ENCODE measurements at regions of chrX and their contacts with region 1.

Region 1: GRCh38 chrX:12021698-12022097 is 116.6 kb upstream of the FRMPD4 start:
- DNase-seq: no peak
- H3K4me3 ChIP-seq: no peak overlapping the region
- H3K27ac ChIP-seq: no peak overlapping the region
- H3K4me1 ChIP-seq: peaks cover 11% of the 10 kb centered on the region
- H3K27me3 ChIP-seq: peaks cover 5 to 13% of the 10 kb centered on the region in 2 experiments
- CTCF ChIP-seq: no peak
- POLR2A ChIP-seq: no peak

Region 2: DNA sequence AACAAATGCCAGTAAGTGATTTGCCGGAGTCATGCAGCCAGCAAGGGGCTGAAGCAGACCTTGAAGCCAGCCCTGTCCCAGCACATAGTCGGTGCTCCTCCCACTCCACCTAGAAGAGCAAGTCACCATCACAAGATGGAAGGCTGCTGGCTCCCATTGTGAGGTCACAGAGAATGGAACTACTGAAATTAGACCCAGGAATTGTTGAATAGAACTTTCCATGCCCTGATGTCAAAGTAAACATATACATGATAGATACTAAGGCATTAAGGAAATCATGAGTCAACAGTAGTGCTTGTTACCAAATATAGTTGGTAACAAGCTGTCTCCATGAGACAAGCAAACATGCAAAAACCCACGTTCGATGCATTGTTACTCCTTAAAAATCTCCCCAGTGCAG is 1224.2 kb before region 1 on chrX:
- CTCF ChIA-PET with region 1: no interaction called
- POLR2A ChIA-PET with region 1: no interaction called
- dilution Hi-C with region 1: no loop called
- intact Hi-C with region 1: no loop called
- DNase-seq: peak; percentile 4
- H3K4me3 ChIP-seq: no peak overlapping the region
- H3K27ac ChIP-seq: no peak overlapping the region
- H3K4me1 ChIP-seq: no peaks in the 10 kb centered on the region
- H3K27me3 ChIP-seq: no peaks in the 10 kb centered on the region
- CTCF ChIP-seq: no peak
- POLR2A ChIP-seq: no peak

Region 3: DNA sequence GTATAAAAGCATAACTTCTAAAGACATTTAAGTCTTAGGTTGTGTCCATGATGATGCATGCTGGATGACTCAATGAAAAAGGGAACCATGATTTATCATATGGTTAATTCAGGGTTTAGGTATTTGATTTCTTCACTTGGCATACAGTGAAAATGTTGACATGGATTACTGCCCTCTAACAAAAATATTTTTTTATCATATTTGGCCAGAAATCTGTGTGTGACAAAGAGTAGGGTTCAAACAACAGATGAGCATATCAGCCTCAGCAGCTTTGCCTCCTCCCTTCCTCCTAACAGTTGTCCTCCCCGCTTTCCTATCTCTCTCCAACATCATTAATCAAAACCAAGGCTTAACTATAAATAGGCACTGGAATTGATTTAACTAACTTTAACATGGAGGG is 402.3 kb before region 1 on chrX:
- CTCF ChIA-PET with region 1: no interaction called
- POLR2A ChIA-PET with region 1: no interaction called
- dilution Hi-C with region 1: no loop called
- intact Hi-C with region 1: no loop called
- DNase-seq: no peak
- H3K4me3 ChIP-seq: no peak overlapping the region
- H3K27ac ChIP-seq: no peak overlapping the region
- H3K4me1 ChIP-seq: no peaks in the 10 kb centered on the region
- H3K27me3 ChIP-seq: no peaks in the 10 kb centered on the region
- CTCF ChIP-seq: no peak
- POLR2A ChIP-seq: no peak

Region 4: DNA sequence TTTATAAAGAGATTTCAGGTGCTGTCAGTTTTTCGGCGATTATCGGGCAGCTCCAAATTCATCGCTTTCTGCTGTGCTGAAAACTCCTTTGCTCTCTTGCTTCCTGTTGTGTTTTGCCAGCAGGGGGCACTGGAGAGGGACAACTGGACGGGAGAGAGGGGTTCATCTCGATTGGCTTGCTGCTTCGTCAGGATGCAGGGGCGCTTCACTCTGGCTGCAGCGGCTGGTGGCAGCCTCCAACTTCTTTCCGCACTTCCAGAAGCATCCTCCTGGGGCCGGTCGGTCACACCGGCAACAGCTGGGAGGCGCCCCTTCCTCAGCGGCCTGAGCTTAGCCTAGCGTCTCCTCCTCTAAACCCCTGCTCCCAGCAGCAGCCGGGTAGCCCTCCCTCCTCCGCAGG is 234.1 kb before region 1 on chrX:
- CTCF ChIA-PET with region 1: no interaction called
- POLR2A ChIA-PET with region 1: no interaction called
- dilution Hi-C with region 1: no loop called
- intact Hi-C with region 1: loop called (anchors 10 kb)
- DNase-seq: peak; percentile 49
- H3K4me3 ChIP-seq: no peak overlapping the region
- H3K27ac ChIP-seq: no peak overlapping the region
- H3K4me1 ChIP-seq: no peaks in the 10 kb centered on the region
- H3K27me3 ChIP-seq: no peaks in the 10 kb centered on the region
- CTCF ChIP-seq: peak; percentile 56 to 62
- POLR2A ChIP-seq: no peak

Region 5: GRCh38 chrX:11953615-11954014 is 68.1 kb before region 1 on chrX:
- CTCF ChIA-PET with region 1: no interaction called
- POLR2A ChIA-PET with region 1: no interaction called
- dilution Hi-C with region 1: no loop called
- intact Hi-C with region 1: loop called (anchors 2 kb)
- DNase-seq: no peak
- H3K4me3 ChIP-seq: no peak overlapping the region
- H3K27ac ChIP-seq: peak overlapping the region; percentile 63
- H3K4me1 ChIP-seq: peaks cover 20% of the 10 kb centered on the region
- H3K27me3 ChIP-seq: no peaks in the 10 kb centered on the region
- CTCF ChIP-seq: no peak
- POLR2A ChIP-seq: no peak

Region 6: GRCh38 chrX:11967986-11968859 is 53.5 kb before region 1 on chrX:
- CTCF ChIA-PET with region 1: no interaction called
- POLR2A ChIA-PET with region 1: no interaction called
- dilution Hi-C with region 1: no loop called
- intact Hi-C with region 1: loop called (anchors 5 kb)
- DNase-seq: no peak
- H3K4me3 ChIP-seq: no peak overlapping the region
- H3K27ac ChIP-seq: no peak overlapping the region
- H3K4me1 ChIP-seq: peaks cover 39% of the 10 kb centered on the region
- H3K27me3 ChIP-seq: no peaks in the 10 kb centered on the region
- CTCF ChIP-seq: no peak
- POLR2A ChIP-seq: no peak

Region 7: DNA sequence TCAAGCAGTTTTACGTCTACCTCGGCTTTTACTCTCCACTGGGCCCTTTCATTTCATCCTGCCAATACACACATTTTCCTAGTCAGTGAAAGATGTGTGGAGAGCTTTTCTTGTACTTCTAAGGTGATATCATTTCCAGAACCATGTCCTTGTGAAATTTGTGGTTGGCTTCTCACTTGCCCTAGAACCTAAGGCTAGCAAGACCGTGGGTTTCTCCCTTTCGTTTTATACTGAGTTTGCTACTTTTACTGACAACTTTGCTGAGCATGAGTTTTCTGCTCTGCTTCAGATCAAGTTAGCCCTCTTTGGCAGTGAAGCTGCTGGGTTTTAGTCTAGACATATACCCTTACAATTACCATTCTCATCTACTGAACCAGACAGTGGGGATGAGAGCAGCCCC is 20.9 kb after region 1 on chrX:
- CTCF ChIA-PET with region 1: no interaction called
- POLR2A ChIA-PET with region 1: no interaction called
- dilution Hi-C with region 1: no loop called
- intact Hi-C with region 1: no loop called
- DNase-seq: no peak
- H3K4me3 ChIP-seq: no peak overlapping the region
- H3K27ac ChIP-seq: no peak overlapping the region
- H3K4me1 ChIP-seq: no peaks in the 10 kb centered on the region
- H3K27me3 ChIP-seq: peaks cover 0 to 2% of the 10 kb centered on the region in 2 experiments
- CTCF ChIP-seq: no peak
- POLR2A ChIP-seq: no peak

Measured in endothelial cell of umbilical vein (primary cell).